Naive thymus-derived CD4-positive, alpha-beta T cell (primary cell): ENCODE measurements at regions of chr10 and their contacts with region 1.

Region 1: GRCh38 chr10:110088367-110089104 is 80.8 kb downstream of the ADD3 start:
- DNase-seq: no peak
- ATAC-seq: no peak
- H3K4me3 ChIP-seq: no peak overlapping the region
- H3K4me3 Mint-ChIP-seq: peak overlapping the region in 5 of 10 donors; percentile 29 to 45 (median 38)
- H3K27ac ChIP-seq: no peak overlapping the region
- H3K27ac Mint-ChIP-seq: peak overlapping the region in 5 of 9 donors; percentile 35 to 65 (median 56)
- H3K4me1 ChIP-seq: peaks cover 32 to 35% of the 10 kb centered on the region in 2 donors
- H3K4me1 Mint-ChIP-seq: peaks cover 43 to 96% (median 82%) of the 10 kb centered on the region in 7 donors
- H3K27me3 ChIP-seq: no peaks in the 10 kb centered on the region
- H3K27me3 Mint-ChIP-seq: no peaks in the 10 kb centered on the region

Region 2: GRCh38 chr10:110101464-110102144 is 13.1 kb after region 1 on chr10:
- CTCF ChIA-PET with region 1: interaction called, 3 read pairs
- POLR2A ChIA-PET with region 1: interaction called, 3 read pairs
- intact Hi-C with region 1: loop called in 1 of 2 experiments (anchors 2 kb)
- DNase-seq: no peak
- ATAC-seq: no peak
- H3K4me3 ChIP-seq: no peak overlapping the region
- H3K4me3 Mint-ChIP-seq: no peak overlapping the region
- H3K27ac ChIP-seq: no peak overlapping the region
- H3K27ac Mint-ChIP-seq: peak overlapping the region in 5 of 9 donors; percentile 12 to 84 (median 78)
- H3K4me1 ChIP-seq: peaks cover 0 to 8% of the 10 kb centered on the region in 2 donors
- H3K4me1 Mint-ChIP-seq: peaks cover 28 to 85% (median 68%) of the 10 kb centered on the region in 7 donors
- H3K27me3 ChIP-seq: no peaks in the 10 kb centered on the region
- H3K27me3 Mint-ChIP-seq: no peaks in the 10 kb centered on the region

Region 3: GRCh38 chr10:110141871-110142635 is 53.5 kb after region 1 on chr10:
- CTCF ChIA-PET with region 1: no interaction called
- POLR2A ChIA-PET with region 1: no interaction called
- intact Hi-C with region 1: no loop called
- DNase-seq: no peak
- ATAC-seq: no peak
- H3K4me3 ChIP-seq: no peak overlapping the region
- H3K4me3 Mint-ChIP-seq: peak overlapping the region in 1 of 10 donors; percentile 3
- H3K27ac ChIP-seq: no peak overlapping the region
- H3K27ac Mint-ChIP-seq: peak overlapping the region in 6 of 9 donors; percentile 22 to 64 (median 40)
- H3K4me1 ChIP-seq: peaks cover 14 to 20% of the 10 kb centered on the region in 2 donors
- H3K4me1 Mint-ChIP-seq: peaks cover 23 to 45% (median 40%) of the 10 kb centered on the region in 7 donors
- H3K27me3 ChIP-seq: no peaks in the 10 kb centered on the region
- H3K27me3 Mint-ChIP-seq: peaks cover 0 to 25% (median 0%) of the 10 kb centered on the region in 5 donors